ENCODE measurements at regions of chr19 and their contacts with region 1.

Region 1: DNA sequence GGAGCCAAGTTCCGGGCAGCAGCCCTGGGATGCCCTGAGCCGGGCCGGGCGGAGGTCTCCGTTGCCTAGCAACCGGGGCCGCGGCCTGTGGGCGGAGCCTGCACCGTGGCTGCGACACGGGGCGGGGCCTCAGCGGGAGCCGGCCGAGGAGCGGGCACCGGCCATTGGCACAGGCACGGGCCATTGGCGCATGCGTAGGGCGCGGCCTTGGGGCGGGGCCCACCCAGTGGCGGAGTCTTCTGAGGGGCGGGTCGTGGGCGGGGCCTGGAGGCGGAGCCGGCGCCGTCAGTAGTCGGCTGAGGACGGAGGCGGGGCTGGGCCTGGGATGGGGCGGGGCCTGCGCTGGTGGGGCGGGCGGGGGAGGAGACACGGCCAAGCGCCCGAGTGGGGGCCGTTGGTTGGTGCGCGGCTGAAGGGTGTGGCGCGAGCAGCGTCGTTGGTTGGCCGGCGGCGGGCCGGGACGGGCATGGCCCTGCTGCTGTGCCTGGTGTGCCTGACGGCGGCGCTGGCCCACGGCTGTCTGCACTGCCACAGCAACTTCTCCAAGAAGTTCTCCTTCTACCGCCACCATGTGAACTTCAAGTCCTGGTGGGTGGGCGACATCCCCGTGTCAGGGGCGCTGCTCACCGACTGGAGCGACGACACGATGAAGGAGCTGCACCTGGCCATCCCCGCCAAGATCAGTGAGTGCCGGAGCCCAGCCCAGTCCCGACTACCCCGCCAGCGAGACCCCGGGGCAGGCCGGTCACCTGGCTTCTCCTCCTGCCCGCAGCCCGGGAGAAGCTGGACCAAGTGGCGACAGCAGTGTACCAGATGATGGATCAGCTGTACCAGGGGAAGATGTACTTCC is at the start of gene IZUMO4:
- DNase-seq: peak; percentile 98 to 100 (median 100)
- ATAC-seq: peak; percentile 78
- H3K4me3 ChIP-seq: peak within 1 kb of the TSS; percentile 82 to 88
- H3K4me3 Mint-ChIP-seq: peak within 1 kb of the TSS; percentile 92
- H3K27ac ChIP-seq: peak within 1 kb of the TSS; percentile 80 to 87
- H3K27ac Mint-ChIP-seq: peak within 1 kb of the TSS; percentile 93
- H3K4me1 ChIP-seq: peaks cover 46% of the 10 kb centered on the region
- H3K4me1 Mint-ChIP-seq: peaks cover 31% of the 10 kb centered on the region
- H3K27me3 ChIP-seq: no peaks in the 10 kb centered on the region
- H3K27me3 Mint-ChIP-seq: no peaks in the 10 kb centered on the region
- CTCF ChIP-seq: peak; percentile 49
- total RNA-seq, gene IZUMO4: 11.9 to 15.3 TPM

Region 2: GRCh38 chr19:1652471-1653299 is 444.0 kb before region 1 on chr19 and contains the start of gene TCF3:
- CTCF ChIA-PET with region 1: no interaction called
- POLR2A ChIA-PET with region 1: no interaction called
- intact Hi-C with region 1: loop called in 1 of 2 experiments (anchors 5 kb)
- DNase-seq: peak; percentile 98 to 99 (median 99)
- ATAC-seq: peak; percentile 90
- H3K4me3 ChIP-seq: peak within 1 kb of the TSS; percentile 66 to 87
- H3K4me3 Mint-ChIP-seq: peak within 1 kb of the TSS; percentile 88
- H3K27ac ChIP-seq: peak within 1 kb of the TSS; percentile 97 to 100
- H3K27ac Mint-ChIP-seq: peak within 1 kb of the TSS; percentile 97
- H3K4me1 ChIP-seq: peaks cover 12% of the 10 kb centered on the region
- H3K4me1 Mint-ChIP-seq: peaks cover 10% of the 10 kb centered on the region
- H3K27me3 ChIP-seq: no peaks in the 10 kb centered on the region
- H3K27me3 Mint-ChIP-seq: no peaks in the 10 kb centered on the region
- CTCF ChIP-seq: no peak
- total RNA-seq, gene TCF3: 67.6 to 69.7 TPM

Region 3: DNA sequence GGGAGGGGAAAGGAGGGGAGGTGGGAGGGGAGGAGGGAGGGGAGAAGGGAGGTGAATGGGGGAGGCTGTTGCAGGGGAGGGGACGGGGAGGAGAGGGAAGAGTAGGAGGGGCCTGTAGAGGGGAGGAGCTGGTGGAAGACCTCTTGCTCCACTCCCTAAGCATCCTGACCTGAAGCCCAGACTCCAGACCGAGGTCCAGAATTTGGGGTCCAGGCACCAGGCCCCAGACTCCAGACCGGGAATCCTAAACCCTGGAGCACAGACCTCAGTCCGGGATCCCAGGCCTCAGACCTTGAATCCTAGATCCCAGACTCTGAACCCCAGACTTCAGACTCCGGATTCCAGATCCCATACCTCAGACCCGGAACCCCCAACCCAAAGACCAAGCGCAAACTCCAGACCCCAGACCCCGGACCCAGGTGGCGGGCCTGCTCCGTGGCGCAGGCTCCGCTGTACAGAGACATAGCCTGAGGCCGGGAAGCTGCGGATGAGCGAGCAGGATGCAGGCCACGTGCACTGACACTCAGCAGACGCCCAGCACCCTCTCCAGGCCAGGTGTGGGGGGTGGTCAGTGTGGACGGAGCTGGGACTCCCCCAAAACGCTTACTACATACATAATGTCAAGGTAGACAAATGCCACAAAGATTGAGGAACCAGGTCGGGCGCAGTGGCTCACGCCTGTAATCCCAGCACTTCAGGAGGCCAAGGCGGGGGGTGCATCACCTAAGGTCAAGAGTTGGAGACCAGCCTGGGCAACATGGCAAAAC is 80.5 kb before region 1 on chr19:
- CTCF ChIA-PET with region 1: interaction called, 13 read pairs
- POLR2A ChIA-PET with region 1: no interaction called
- intact Hi-C with region 1: loop called (anchors 1 to 2 kb)
- DNase-seq: peak in 8 of 9 experiments; percentile 24 to 82 (median 57)
- ATAC-seq: peak; percentile 50
- H3K4me3 ChIP-seq: no peak overlapping the region
- H3K4me3 Mint-ChIP-seq: peak overlapping the region; percentile 63
- H3K27ac ChIP-seq: no peak overlapping the region
- H3K27ac Mint-ChIP-seq: no peak overlapping the region
- H3K4me1 ChIP-seq: peaks cover 15% of the 10 kb centered on the region
- H3K4me1 Mint-ChIP-seq: peaks cover 27% of the 10 kb centered on the region
- H3K27me3 ChIP-seq: no peaks in the 10 kb centered on the region
- H3K27me3 Mint-ChIP-seq: no peaks in the 10 kb centered on the region
- CTCF ChIP-seq: no peak

Region 4: DNA sequence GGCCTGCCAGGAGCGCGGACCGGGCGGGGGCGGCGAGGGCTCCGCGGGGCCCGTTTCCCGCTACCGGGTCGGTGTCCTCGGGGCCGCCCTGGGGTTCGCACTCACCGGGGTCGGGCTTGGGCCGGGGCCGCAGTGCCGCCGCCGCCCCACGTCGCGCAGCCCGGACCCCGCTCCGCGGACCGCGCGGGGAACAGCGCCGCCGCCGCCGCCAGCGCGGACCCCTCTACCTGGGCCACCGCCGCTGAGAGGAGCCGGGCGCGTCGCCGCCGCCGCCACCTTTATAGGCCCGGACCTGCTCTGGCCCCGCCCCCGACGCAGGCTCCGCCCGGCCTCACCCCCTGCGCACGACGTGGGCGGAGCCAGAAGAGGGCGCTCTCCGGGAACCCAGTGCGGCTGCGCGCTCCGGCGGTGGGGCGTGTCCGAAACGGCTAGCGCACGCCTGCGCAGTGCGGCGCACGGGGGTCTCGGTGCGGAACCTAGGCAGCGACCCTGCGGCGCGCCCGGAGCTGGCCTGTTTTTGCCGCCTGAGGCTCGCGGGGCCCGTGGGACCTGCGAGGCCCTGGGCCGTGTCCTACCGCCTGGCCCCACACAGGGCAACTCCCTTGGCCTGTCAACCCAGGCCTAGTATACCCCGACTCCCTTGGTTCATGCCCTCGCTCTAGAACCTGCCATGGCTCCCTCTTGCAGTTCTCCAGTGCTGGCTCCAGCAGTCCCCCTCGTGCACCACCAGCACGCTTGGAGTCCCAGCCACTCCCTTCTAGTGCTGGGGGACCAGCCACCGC is 45.5 kb before region 1 on chr19 and contains the start of gene MKNK2:
- CTCF ChIA-PET with region 1: interaction called, 5 read pairs
- POLR2A ChIA-PET with region 1: interaction called, 20 read pairs
- intact Hi-C with region 1: loop called (anchors 1 kb)
- DNase-seq: peak; percentile 87 to 99 (median 94)
- ATAC-seq: peak; percentile 79
- H3K4me3 ChIP-seq: peak within 1 kb of the TSS; percentile 94 to 98
- H3K4me3 Mint-ChIP-seq: peak within 1 kb of the TSS; percentile 86
- H3K27ac ChIP-seq: peak within 1 kb of the TSS; percentile 78 to 94
- H3K27ac Mint-ChIP-seq: peak within 1 kb of the TSS; percentile 89
- H3K4me1 ChIP-seq: peaks cover 73% of the 10 kb centered on the region
- H3K4me1 Mint-ChIP-seq: peaks cover 46% of the 10 kb centered on the region
- H3K27me3 ChIP-seq: no peaks in the 10 kb centered on the region
- H3K27me3 Mint-ChIP-seq: no peaks in the 10 kb centered on the region
- CTCF ChIP-seq: peak; percentile 29
- total RNA-seq, gene MKNK2: 453 to 455 TPM

Region 5: GRCh38 chr19:2084993-2085720 is 11.5 kb before region 1 on chr19:
- CTCF ChIA-PET with region 1: interaction called, 28 read pairs
- POLR2A ChIA-PET with region 1: interaction called, 57 read pairs
- intact Hi-C with region 1: loop called (anchors 1 kb)
- DNase-seq: peak; percentile 85 to 99 (median 94)
- ATAC-seq: peak; percentile 51
- H3K4me3 ChIP-seq: peak overlapping the region; percentile 73 to 82
- H3K4me3 Mint-ChIP-seq: peak overlapping the region; percentile 98
- H3K27ac ChIP-seq: peak overlapping the region; percentile 89 to 95
- H3K27ac Mint-ChIP-seq: peak overlapping the region; percentile 98
- H3K4me1 ChIP-seq: peaks cover 73% of the 10 kb centered on the region
- H3K4me1 Mint-ChIP-seq: peaks cover 76% of the 10 kb centered on the region
- H3K27me3 ChIP-seq: no peaks in the 10 kb centered on the region
- H3K27me3 Mint-ChIP-seq: no peaks in the 10 kb centered on the region
- CTCF ChIP-seq: no peak

Region 6: DNA sequence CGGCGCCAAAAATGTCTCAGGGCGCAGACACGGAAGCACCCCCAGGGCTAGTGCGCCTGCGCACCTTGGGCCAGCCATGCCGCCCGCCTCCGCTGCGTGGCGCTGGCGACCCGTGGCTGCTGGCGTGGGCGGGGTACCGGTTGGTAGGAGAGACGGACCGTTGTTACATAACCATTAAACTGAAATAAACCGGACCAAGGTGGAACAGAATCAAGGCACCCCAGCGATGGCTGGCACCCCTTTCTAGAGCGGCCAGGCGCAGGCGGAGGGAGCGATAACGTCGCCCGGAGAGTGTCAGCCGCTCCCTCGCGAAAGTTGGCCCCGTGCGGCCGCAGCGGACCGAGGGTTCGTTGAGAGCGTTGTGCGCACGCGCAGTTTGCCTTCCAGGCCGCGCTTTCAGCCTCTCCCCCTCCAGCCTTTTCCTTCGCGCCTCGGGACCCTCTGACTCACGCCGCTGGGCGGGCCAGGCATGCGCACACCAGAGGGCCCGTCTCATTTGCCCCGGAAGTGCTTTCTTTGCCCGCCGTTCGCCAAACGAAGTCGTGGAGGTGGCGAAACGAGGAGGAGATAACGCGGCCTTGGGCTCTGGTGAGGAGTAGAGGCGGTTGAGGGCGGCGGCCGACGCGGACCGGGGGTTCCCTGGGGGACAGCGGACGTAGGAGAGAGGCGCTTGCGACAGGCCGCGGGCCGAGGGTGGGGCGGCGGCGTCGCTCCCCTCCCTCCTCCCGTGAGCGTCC is 139.8 kb after region 1 on chr19 and contains the starts of genes PLEKHJ1 and SF3A2:
- CTCF ChIA-PET with region 1: no interaction called
- POLR2A ChIA-PET with region 1: interaction called, 3 read pairs
- intact Hi-C with region 1: loop called in 1 of 2 experiments (anchors 2 kb)
- DNase-seq: peak; percentile 96 to 100 (median 98)
- ATAC-seq: peak; percentile 81
- H3K4me3 ChIP-seq: peak within 1 kb of the TSS; percentile 75 to 83
- H3K4me3 Mint-ChIP-seq: peak within 1 kb of the TSS; percentile 97
- H3K27ac ChIP-seq: peak within 1 kb of the TSS; percentile 99
- H3K27ac Mint-ChIP-seq: peak within 1 kb of the TSS; percentile 99
- H3K4me1 ChIP-seq: peaks cover 58% of the 10 kb centered on the region
- H3K4me1 Mint-ChIP-seq: peaks cover 57% of the 10 kb centered on the region
- H3K27me3 ChIP-seq: no peaks in the 10 kb centered on the region
- H3K27me3 Mint-ChIP-seq: no peaks in the 10 kb centered on the region
- CTCF ChIP-seq: peak; percentile 99
- total RNA-seq, gene PLEKHJ1: 25.9 to 26.1 TPM
- total RNA-seq, gene SF3A2: 164 to 167 TPM